Tibial artery (tissue), 4 donors: ENCODE measurements at regions of chr15 and their contacts with region 1.

Region 1: GRCh38 chr15:100101426-100102089 is 240.2 kb downstream of the ADAMTS17 start:
- DNase-seq: peak in 1 of 2 donors; percentile 58
- H3K4me3 ChIP-seq: no peak overlapping the region
- H3K27ac ChIP-seq: peak overlapping the region in 1 of 2 donors; percentile 23
- H3K4me1 ChIP-seq: peaks cover 0 to 19% (median 4%) of the 10 kb centered on the region in 4 donors
- H3K27me3 ChIP-seq: no peaks in the 10 kb centered on the region
- CTCF ChIP-seq: no peak

Region 2: GRCh38 chr15:100053474-100054121 is 48.0 kb before region 1 on chr15:
- intact Hi-C with region 1: loop called (anchors 10 kb)
- DNase-seq: no peak
- H3K4me3 ChIP-seq: no peak overlapping the region
- H3K27ac ChIP-seq: no peak overlapping the region
- H3K4me1 ChIP-seq: peaks cover 0 to 9% (median 2%) of the 10 kb centered on the region in 4 donors
- H3K27me3 ChIP-seq: no peaks in the 10 kb centered on the region
- CTCF ChIP-seq: no peak